Gastrocnemius medialis (tissue), 4 donors: ENCODE measurements at regions of chr6 and their contacts with region 1.

Region 1: DNA sequence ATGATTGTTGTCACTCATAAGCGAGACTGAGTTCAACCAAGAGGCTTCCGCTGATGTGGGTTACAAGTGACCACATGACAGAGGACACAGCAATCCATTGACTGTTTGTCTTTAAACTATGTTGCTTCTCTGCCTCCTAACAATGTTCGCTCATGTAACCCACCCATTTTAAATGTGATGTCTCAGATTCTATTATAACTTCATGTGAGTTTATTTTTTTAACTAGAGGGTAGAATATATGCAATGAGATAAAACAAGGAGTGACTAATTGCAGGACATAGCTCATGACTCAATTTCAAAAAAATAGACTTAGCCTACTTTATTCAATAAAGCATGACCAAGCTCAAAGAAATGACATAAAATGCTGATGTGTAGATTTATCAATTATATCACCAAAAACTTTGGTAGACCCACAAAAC is 119.2 kb upstream of the SASH1 start:
- DNase-seq: no peak
- ATAC-seq: no peak
- H3K4me3 ChIP-seq: no peak overlapping the region
- H3K27ac ChIP-seq: no peak overlapping the region
- H3K4me1 ChIP-seq: no peaks in the 10 kb centered on the region
- H3K27me3 ChIP-seq: no peaks in the 10 kb centered on the region
- CTCF ChIP-seq: no peak
- POLR2A ChIP-seq: no peak

Region 2: DNA sequence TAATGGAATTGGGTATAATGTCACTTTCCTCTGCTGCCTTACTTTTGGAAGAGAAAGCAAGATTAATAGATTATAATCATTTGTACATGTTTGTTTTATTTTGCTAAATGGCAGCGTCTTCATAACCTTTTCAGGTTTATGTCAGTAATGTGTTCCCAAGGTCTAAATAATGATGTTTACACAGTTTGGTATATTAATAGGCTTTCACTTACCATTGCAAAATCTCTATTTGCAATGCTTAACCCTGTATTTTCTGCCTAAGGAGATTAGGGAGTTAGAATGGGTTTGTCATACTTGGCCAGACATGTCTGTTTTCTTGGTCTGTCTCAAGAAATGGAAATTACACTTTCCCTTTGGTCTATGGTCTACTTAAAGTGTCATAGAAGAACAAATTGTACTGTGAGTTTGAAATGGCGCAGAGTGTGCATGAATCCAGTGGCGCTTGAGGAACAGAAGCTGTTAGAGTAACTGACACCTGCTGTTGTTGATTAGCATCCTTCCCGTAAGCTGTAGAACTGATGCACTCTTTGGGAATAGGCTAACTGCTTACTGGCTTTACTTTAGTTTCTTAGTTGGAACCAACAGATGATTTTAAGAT is 453.8 kb before region 1 on chr6:
- in situ Hi-C with region 1: no loop called
- intact Hi-C with region 1: loop called (anchors 5 kb)
- DNase-seq: no peak
- ATAC-seq: no peak
- H3K4me3 ChIP-seq: no peak overlapping the region
- H3K27ac ChIP-seq: no peak overlapping the region
- H3K4me1 ChIP-seq: no peaks in the 10 kb centered on the region
- H3K27me3 ChIP-seq: no peaks in the 10 kb centered on the region
- CTCF ChIP-seq: no peak
- POLR2A ChIP-seq: no peak